Activated naive CD4-positive, alpha-beta T cell treated with anti-CD3 and anti-CD28 coated beads, Interleukin-2, amount 10 ng/mL, durations not matched to agents 7 days and 5 days (primary cell): ENCODE measurements at regions of chr20 and their contacts with region 1.

Region 1: DNA sequence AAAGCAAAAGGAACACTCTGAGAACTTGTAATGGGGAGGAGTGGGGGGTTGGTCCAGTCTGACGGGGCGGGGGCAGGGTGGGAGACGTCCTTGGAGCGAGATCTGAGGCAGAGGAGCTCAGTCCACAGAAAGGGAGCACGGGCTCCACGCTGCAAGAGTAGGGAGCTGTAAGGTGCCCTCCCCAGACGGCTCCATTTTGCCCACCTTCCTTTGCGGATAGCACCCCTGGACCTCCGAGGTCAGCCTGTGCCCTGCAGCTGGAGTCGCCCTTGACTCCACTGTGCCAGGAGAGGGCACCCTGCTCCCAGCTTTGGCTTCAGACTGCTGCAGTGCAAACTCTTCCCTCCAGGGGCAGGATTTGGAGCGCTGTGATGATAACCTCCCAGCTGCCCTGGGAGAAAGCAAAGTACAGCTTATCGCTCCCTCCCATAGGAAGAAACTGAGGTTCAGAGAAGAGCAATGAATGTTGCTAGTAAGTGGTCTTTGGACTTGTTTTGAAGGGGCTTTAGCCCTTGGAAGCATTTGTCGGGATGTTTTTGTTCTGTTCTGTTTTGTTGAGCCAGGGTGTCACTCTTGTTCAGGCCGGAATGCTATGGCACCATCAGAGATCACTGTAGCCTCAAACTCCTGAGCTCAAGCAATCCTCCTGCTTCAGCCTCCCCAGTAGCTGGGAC is 9.5 kb upstream of the AHCY start:
- DNase-seq: peak; percentile 92
- H3K4me3 Mint-ChIP-seq: no peak overlapping the region
- H3K27ac Mint-ChIP-seq: no peak overlapping the region
- H3K4me1 Mint-ChIP-seq: peaks cover 13% of the 10 kb centered on the region
- H3K27me3 Mint-ChIP-seq: peaks cover 52% of the 10 kb centered on the region

Region 2: GRCh38 chr20:33770005-33770404 is 542.7 kb before region 1 on chr20:
- CTCF ChIA-PET with region 1: no interaction called
- DNase-seq: no peak
- H3K4me3 Mint-ChIP-seq: no peak overlapping the region
- H3K27ac Mint-ChIP-seq: no peak overlapping the region
- H3K4me1 Mint-ChIP-seq: no peaks in the 10 kb centered on the region
- H3K27me3 Mint-ChIP-seq: no peaks in the 10 kb centered on the region

Region 3: GRCh38 chr20:34190679-34191090 is 122.0 kb before region 1 on chr20:
- CTCF ChIA-PET with region 1: interaction called, 36 read pairs
- DNase-seq: peak; percentile 68
- H3K4me3 Mint-ChIP-seq: no peak overlapping the region
- H3K27ac Mint-ChIP-seq: no peak overlapping the region
- H3K4me1 Mint-ChIP-seq: peaks cover 11% of the 10 kb centered on the region
- H3K27me3 Mint-ChIP-seq: peaks cover 52% of the 10 kb centered on the region

Region 4: DNA sequence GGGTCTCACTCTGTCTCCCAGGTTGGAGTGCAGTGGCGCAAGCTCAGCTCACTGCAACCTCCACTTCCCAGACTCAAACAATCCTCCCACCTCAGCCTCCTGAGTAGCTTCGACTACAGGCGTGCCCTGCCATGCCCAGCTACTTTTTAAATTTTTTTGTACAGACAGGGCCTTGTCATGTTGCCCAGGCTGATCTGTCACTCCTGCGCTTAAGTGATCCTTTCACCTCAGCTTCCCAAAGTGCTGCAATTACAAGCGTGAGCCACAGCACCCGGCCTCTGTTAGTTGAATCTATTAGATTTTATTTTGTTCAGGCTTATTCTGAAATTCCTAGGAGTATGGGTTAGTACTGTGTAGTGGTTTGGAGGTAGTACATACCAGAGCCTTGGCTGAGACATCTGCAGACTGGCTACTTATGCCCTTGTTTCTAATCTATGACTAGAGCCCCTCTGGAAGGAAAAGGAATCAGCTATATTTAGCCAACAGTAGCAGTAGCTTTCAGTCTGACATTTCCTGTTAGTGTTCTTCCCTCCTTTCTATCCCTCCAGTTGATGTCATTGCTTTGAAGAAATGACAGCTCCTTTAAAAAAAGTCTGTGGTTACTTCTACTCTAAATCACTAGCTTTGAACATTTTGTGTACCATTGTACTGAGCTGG is 124.8 kb after region 1 on chr20:
- CTCF ChIA-PET with region 1: interaction called, 14 read pairs
- DNase-seq: no peak
- H3K4me3 Mint-ChIP-seq: no peak overlapping the region
- H3K27ac Mint-ChIP-seq: peak overlapping the region; percentile 46
- H3K4me1 Mint-ChIP-seq: peaks cover 19% of the 10 kb centered on the region
- H3K27me3 Mint-ChIP-seq: no peaks in the 10 kb centered on the region

Region 5: DNA sequence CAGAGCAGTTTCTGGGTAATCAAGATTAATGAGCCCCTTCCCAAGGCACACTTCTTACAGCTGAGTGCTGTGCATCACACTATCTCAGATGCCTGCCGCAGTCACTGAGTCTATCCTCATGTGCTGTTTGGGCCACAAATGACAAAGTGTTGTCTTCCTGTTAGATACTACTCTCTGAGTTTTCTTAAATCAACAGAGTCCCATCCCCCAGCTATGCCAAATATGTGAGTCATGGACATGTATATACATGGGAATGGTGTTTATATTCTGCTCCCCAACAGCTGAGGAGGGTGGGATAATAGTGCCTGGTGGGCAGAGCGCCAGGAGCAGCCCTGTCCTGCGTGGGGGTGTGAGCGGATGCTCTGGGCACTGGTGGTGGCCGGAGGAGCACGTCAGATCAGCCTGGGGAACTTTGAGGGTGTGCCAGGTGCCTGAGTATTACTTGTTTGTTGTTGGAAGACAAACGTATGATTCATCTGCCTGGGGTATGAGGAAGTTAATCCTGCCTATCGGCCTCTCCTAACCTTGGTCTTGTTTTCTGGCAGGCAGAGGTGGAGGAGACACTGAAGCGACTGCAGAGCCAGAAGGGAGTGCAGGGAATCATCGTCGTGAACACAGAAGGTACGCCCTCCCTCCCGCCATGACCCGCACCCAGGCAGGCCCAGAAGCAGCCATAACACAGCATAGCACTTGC is 213.2 kb after region 1 on chr20:
- CTCF ChIA-PET with region 1: interaction called, 142 read pairs
- DNase-seq: no peak
- H3K4me3 Mint-ChIP-seq: no peak overlapping the region
- H3K27ac Mint-ChIP-seq: no peak overlapping the region
- H3K4me1 Mint-ChIP-seq: peaks cover 9% of the 10 kb centered on the region
- H3K27me3 Mint-ChIP-seq: no peaks in the 10 kb centered on the region

Region 6: DNA sequence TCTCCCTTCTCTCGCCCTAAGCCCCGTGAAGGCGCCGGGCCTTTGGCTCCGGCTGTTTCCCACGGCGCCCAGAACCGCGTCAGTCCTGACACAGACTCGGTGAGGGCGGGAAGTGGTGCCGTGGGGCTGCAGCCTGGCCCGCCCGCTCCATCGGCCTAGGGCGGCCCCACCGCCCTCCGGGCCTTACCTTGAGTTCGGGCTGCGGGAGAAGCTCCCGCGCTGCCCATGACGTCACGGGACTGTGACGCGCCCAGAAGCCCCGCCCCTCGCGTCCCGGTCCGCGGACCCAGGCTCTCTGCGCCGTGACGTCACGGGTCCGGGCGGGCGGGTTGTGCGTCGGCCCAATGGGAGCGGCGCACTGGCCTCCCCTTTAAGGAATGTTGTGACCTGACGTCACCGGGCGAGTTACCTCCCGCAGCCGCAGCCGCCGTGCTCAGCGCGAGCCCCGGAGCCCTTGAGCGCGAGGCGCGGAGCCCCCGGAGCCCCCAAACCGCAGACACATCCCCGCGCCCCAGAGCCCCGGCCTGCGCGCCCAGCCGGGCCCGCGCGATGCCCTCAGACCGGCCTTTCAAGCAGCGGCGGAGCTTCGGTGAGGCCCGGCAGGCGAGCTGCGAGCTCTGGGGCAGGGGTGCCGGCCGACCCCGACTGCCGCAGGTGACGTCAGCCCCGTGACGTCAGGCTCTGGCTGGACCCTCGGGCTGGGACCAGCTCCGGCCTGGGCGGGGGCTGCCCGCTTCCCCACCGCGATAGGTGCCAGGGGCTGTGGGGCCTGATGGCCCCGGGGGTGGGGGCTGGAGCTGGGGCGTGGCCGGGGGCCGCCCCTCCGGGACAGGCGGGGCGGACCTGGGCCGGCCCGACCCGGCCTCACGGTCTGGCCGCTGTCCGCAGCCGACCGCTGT is 245.9 kb after region 1 on chr20 and contains the start of gene MAP1LC3A:
- CTCF ChIA-PET with region 1: interaction called, 11 read pairs
- DNase-seq: peak; percentile 94
- H3K4me3 Mint-ChIP-seq: peak within 1 kb of the TSS; percentile 71
- H3K27ac Mint-ChIP-seq: peak within 1 kb of the TSS; percentile 79
- H3K4me1 Mint-ChIP-seq: peaks cover 13% of the 10 kb centered on the region
- H3K27me3 Mint-ChIP-seq: no peaks in the 10 kb centered on the region

Region 7: GRCh38 chr20:34768096-34768495 is 455.4 kb after region 1 on chr20:
- CTCF ChIA-PET with region 1: interaction called, 37 read pairs
- DNase-seq: no peak
- H3K4me3 Mint-ChIP-seq: no peak overlapping the region
- H3K27ac Mint-ChIP-seq: no peak overlapping the region
- H3K4me1 Mint-ChIP-seq: no peaks in the 10 kb centered on the region
- H3K27me3 Mint-ChIP-seq: no peaks in the 10 kb centered on the region